Brain microvascular endothelial cell (primary cell): ENCODE measurements at regions of chr20 and their contacts with region 1.

Region 1: DNA sequence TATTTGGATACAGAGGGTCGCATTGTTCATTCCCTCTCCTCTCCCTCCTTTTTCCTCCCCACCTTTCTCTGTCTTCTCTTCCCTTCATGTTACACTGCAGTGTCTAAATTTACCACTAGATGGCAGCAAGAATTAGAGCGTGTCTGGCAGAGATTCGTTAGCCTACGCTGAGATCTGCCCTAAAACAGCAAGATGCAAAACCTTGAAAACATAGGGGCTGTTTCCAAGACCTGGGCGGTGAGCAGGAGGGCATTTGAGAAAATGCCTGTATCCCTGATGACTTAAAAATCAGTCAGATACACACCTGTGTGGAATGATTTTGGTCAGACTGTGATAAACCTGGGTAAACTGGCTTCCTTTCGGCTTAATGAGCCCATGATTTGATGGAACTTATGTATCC is 101.5 kb upstream of the ISM1 start:
- DNase-seq: peak; percentile 61
- H3K4me3 ChIP-seq: no peak overlapping the region
- H3K27ac ChIP-seq: no peak overlapping the region
- H3K27me3 ChIP-seq: no peaks in the 10 kb centered on the region
- CTCF ChIP-seq: peak; percentile 90

Region 2: GRCh38 chr20:12970372-12970821 is 149.2 kb before region 1 on chr20:
- in situ Hi-C with region 1: loop called (anchors 25 kb)
- DNase-seq: peak; percentile 39
- H3K4me3 ChIP-seq: no peak overlapping the region
- H3K27ac ChIP-seq: no peak overlapping the region
- H3K27me3 ChIP-seq: no peaks in the 10 kb centered on the region
- CTCF ChIP-seq: peak; percentile 68